A549 (cell line): ENCODE measurements at regions of chrX and their contacts with region 1.

Region 1: GRCh38 chrX:123771449-123772064 is 38.7 kb upstream of the THOC2 start:
- DNase-seq: peak in 1 of 2 experiments; percentile 45
- ATAC-seq: peak; percentile 69 to 80; a peak in 5 of 6 replicates
- H3K4me3 ChIP-seq: no peak overlapping the region
- H3K27ac ChIP-seq: peak overlapping the region; percentile 90 to 91
- H3K4me1 ChIP-seq: peaks cover 26% of the 10 kb centered on the region
- CTCF ChIP-seq: no peak
- EP300 ChIP-seq: no peak
- POLR2A ChIP-seq: no peak
- RAD21 ChIP-seq: no peak

Region 2: DNA sequence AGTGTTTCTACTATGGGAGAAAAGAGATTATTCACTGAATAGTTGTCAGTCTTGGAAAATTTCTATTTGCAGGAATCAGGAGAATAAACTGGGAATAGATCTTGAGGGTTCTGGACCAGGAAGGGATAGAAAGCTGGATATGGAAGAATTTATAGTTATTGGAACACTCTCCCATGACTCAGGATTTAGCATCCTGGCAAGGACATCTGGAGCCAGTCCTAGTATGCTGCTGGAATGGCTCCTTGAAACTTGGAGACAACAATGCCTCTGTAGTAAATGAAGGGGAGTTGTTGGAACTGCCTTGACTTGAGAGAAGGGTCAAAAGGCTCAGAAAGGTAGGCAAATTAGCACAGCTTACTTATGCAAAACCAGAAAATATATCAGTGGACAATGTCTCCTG is 15.2 kb before region 1 on chrX:
- CTCF ChIA-PET with region 1: no interaction called
- POLR2A ChIA-PET with region 1: no interaction called
- DNase-seq: no peak
- ATAC-seq: no peak
- H3K4me3 ChIP-seq: no peak overlapping the region
- H3K27ac ChIP-seq: no peak overlapping the region
- H3K4me1 ChIP-seq: peaks cover 11% of the 10 kb centered on the region; the same call in 2 of the 3 replicates
- CTCF ChIP-seq: no peak
- EP300 ChIP-seq: no peak
- POLR2A ChIP-seq: no peak
- RAD21 ChIP-seq: no peak

Region 3: DNA sequence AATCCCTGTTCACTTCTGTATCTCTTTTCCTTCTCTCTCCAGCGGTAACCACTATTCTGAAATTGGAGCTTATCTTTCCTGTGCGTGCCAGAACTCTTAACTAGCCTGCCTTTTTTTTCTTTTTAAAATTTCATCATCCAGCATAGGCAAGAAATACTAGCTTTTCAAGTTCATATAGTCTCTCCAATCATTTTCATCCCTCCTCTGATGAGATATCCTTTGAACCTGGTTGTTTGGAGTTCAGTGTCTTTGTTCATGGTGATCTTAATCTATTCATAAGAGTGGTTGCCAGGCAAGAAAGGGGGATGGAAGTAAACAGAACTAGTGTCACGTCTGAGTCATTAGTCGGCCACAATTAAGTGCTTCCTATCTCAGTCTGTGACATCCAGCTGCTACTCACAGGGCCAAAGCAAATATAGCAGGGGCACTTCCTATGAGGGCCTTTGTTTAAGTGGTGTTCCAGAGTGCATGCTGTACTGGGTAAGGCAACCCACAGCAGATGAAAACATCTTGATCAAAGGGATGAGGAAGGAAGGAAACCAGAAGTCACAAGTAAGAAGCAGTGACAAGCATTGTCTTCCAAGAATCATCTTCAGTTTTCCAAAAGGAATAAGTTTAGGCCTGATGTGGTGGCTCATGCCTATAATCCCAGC is 31.9 kb after region 1 on chrX:
- CTCF ChIA-PET with region 1: interaction called, 31 read pairs
- POLR2A ChIA-PET with region 1: interaction called, 4 read pairs
- DNase-seq: peak; percentile 66 to 95
- ATAC-seq: peak; percentile 92 to 96
- H3K4me3 ChIP-seq: no peak overlapping the region
- H3K27ac ChIP-seq: peak overlapping the region; percentile 86
- H3K4me1 ChIP-seq: peaks cover 55% of the 10 kb centered on the region
- CTCF ChIP-seq: no peak
- EP300 ChIP-seq: peak; percentile 21 to 64; a peak in 3 of 5 replicates
- POLR2A ChIP-seq: no peak
- RAD21 ChIP-seq: no peak

Region 4: DNA sequence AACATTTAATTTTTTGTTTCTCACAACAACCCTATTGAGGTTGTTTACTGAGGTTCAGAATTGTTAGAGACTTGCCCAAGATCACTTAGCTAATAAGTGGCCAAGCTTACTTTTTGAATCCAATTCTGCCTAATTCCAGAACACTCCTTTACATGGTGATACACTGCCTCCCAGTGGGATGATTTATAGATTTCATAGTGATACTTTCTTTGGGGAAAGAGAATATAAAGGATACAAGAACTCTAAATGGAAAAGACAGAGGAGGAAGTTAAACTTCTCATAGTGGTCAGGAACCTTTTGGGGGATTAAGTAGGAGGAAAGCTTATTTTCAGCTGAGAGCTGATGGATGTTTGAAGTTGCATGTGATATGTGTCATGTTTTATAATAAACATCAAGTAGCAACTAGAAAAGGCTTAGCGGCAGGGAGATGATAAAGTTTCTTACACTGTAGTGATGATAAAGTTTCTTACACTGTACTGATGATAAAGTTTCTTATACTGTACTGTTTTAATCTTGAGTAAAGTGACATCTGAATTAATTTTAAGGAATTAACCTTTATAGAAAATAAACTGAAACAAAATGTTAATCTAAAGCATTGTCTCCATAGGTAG is 205.3 kb after region 1 on chrX:
- CTCF ChIA-PET with region 1: interaction called, 11 read pairs
- POLR2A ChIA-PET with region 1: no interaction called
- DNase-seq: peak; percentile 41 to 64
- ATAC-seq: peak; percentile 83 to 88
- H3K4me3 ChIP-seq: no peak overlapping the region
- H3K27ac ChIP-seq: no peak overlapping the region
- H3K4me1 ChIP-seq: peaks cover 56% of the 10 kb centered on the region
- CTCF ChIP-seq: peak; percentile 59
- EP300 ChIP-seq: no peak
- POLR2A ChIP-seq: no peak
- RAD21 ChIP-seq: peak; percentile 75 to 82

Region 5: DNA sequence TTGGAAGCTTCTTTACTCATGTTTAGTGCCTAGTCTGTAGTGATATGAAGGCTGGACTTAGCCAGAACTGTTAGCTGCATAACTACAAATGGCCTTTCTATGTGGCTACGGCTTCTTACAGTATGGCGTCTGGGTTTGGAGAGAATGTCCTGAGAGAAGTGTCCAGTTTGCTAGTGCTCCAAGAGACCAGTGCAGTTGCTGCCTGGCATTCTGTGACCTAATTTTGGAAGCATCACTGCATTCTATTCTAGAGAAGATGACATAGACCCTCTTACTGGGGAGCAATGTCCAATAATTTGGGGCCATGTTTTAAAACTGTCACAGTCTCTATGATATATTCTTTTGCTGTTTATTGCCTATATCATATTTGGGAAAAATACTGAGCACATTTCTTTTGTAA is 264.1 kb after region 1 on chrX:
- CTCF ChIA-PET with region 1: no interaction called
- POLR2A ChIA-PET with region 1: no interaction called
- DNase-seq: no peak
- ATAC-seq: no peak
- H3K4me3 ChIP-seq: no peak overlapping the region
- H3K27ac ChIP-seq: no peak overlapping the region
- H3K4me1 ChIP-seq: no peaks in the 10 kb centered on the region
- CTCF ChIP-seq: no peak
- EP300 ChIP-seq: no peak
- POLR2A ChIP-seq: no peak
- RAD21 ChIP-seq: no peak